Activated CD4-positive, alpha-beta T cell treated with anti-CD3 and anti-CD28 coated beads for 36 hours (primary cell): ENCODE measurements at regions of chr1 and their contacts with region 1.

Region 1: DNA sequence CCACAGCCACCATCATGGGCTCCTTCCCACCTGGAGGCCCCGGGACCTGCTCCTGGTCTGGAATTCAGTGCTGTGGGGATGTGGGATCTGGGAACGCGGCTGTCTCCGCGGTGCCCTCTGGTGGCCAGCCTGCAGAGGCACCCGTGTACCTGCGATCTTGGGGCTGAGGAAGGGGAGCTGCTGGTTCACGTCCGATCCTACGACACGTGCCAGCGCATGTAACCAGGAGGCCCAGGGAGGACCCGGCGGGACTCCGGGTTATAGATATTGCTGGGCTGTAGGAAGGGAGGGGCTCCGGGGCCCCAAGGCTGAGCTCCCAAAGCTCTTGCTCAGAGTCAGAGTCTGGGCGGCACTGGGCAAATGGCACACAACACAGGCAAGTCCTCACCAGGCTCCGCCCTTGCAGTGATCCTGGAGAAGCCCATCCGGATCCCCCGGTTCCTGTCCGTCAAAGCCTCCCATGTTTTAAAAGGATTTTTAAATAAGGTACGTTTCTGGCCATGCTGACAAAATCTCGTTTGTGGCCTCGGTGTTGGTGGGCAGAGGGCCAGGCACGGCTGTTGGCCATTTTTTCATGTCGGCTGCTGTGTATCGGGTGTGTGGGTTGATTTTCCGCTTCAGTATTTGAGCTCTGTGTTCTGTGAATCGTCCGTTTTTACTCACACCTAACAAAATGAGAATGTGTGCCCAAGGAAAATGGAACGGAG is 20.1 kb downstream of the FAAP20 start:
- DNase-seq: peak; percentile 73
- ATAC-seq: peak; percentile 80
- H3K4me3 Mint-ChIP-seq: peak overlapping the region; percentile 61
- H3K27ac Mint-ChIP-seq: peak overlapping the region; percentile 52
- H3K4me1 Mint-ChIP-seq: peaks cover 2% of the 10 kb centered on the region
- H3K27me3 Mint-ChIP-seq: no peaks in the 10 kb centered on the region

Region 2: GRCh38 chr1:1959840-1960479 is 214.5 kb before region 1 on chr1:
- CTCF ChIA-PET with region 1: interaction called, 3 read pairs
- POLR2A ChIA-PET with region 1: no interaction called
- intact Hi-C with region 1: loop called in 1 of 2 experiments (anchors 5 kb)
- DNase-seq: peak; percentile 93
- ATAC-seq: peak; percentile 93
- H3K4me3 Mint-ChIP-seq: no peak overlapping the region
- H3K27ac Mint-ChIP-seq: peak overlapping the region; percentile 67
- H3K4me1 Mint-ChIP-seq: peaks cover 11% of the 10 kb centered on the region
- H3K27me3 Mint-ChIP-seq: peaks cover 17% of the 10 kb centered on the region

Region 3: DNA sequence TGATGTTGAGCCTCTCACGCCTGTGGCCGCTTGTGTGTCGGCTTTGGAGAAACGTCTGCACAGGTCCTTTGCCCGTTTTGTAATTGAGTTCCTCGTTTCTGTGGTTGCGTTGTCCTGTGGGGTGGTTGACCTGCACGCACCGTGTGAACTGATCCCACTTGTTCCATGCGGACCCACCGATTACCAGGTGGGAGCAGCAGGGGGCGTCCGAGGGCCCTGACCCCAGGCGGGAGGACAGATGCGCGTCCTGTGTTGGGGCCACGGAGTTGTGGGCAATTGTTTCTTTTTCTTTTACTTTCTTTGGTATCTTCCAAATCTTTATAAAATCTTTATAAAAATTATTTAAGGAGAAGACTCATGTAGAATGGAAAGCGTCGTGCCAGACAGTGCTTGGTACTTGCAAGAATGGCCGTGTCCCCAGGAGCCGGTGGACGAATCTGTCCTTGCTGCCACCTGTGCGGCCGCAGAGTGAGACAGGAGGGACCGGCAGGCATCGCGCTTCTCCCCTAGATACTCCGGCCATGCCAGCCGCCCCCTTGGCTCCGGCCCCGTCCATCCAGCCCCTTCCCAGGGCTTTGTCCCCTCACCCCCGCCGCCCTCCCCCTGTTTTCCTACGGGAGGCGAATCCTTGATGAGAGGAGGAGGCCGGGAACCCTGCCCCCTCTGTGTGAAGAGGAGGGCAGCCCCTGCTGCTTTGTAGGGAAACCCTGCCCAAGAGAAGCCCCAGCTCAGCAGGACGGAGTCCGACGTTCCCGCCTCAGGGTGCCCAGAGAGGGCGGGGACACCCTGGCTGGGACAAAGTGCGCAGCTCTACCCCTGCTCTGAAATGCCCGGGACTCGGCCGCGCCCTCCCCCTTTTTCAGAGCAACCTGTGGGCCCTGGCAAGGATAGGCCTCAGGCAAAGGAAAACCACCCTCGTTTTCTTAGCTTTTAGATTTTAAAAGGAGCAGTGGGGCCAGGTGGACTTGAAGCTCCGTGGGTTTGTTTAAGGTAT is 82.6 kb before region 1 on chr1:
- CTCF ChIA-PET with region 1: interaction called, 9 read pairs
- POLR2A ChIA-PET with region 1: no interaction called
- intact Hi-C with region 1: loop called (anchors 1 to 5 kb)
- DNase-seq: peak; percentile 79
- ATAC-seq: peak; percentile 78
- H3K4me3 Mint-ChIP-seq: no peak overlapping the region
- H3K27ac Mint-ChIP-seq: no peak overlapping the region
- H3K4me1 Mint-ChIP-seq: peaks cover 3% of the 10 kb centered on the region
- H3K27me3 Mint-ChIP-seq: no peaks in the 10 kb centered on the region

Region 4: DNA sequence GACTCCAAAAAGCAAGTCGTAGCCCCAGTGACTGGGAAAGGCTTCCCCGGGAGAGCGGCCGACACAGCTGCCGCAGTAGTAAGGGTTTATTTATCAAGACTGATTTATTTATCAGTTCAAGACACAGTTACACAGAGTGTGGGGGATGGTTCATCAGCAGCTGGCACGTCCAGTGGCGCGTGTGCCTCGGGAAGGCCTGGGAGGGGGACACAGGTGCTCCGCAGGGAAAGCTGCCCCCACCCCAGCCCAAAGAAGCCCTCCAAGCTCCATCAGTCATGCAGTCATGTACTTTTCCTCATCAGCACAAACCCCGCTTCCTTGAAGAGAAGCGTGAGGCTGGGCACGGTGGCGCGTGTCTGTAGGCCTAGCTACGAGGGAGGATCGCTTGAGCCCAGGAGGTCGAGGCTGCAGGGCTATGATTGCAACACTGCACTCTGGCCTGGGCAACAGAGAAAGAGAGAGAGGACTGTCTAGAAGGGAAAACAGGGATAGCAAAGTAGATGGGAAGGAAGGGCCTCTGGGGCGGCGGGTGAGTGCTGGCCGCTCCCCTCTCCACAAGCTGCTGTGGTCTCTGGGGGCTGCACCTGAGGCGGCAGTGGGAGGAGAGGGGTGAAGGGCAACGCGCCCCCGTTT is 71.1 kb before region 1 on chr1:
- CTCF ChIA-PET with region 1: no interaction called
- POLR2A ChIA-PET with region 1: no interaction called
- intact Hi-C with region 1: no loop called
- DNase-seq: no peak
- ATAC-seq: no peak
- H3K4me3 Mint-ChIP-seq: no peak overlapping the region
- H3K27ac Mint-ChIP-seq: no peak overlapping the region
- H3K4me1 Mint-ChIP-seq: no peaks in the 10 kb centered on the region
- H3K27me3 Mint-ChIP-seq: no peaks in the 10 kb centered on the region

Region 5: GRCh38 chr1:2300851-2301606 is 126.5 kb after region 1 on chr1:
- CTCF ChIA-PET with region 1: no interaction called
- POLR2A ChIA-PET with region 1: no interaction called
- intact Hi-C with region 1: no loop called
- DNase-seq: peak; percentile 95
- ATAC-seq: peak; percentile 81
- H3K4me3 Mint-ChIP-seq: peak overlapping the region; percentile 79
- H3K27ac Mint-ChIP-seq: peak overlapping the region; percentile 95
- H3K4me1 Mint-ChIP-seq: peaks cover 59% of the 10 kb centered on the region
- H3K27me3 Mint-ChIP-seq: no peaks in the 10 kb centered on the region

Region 6: DNA sequence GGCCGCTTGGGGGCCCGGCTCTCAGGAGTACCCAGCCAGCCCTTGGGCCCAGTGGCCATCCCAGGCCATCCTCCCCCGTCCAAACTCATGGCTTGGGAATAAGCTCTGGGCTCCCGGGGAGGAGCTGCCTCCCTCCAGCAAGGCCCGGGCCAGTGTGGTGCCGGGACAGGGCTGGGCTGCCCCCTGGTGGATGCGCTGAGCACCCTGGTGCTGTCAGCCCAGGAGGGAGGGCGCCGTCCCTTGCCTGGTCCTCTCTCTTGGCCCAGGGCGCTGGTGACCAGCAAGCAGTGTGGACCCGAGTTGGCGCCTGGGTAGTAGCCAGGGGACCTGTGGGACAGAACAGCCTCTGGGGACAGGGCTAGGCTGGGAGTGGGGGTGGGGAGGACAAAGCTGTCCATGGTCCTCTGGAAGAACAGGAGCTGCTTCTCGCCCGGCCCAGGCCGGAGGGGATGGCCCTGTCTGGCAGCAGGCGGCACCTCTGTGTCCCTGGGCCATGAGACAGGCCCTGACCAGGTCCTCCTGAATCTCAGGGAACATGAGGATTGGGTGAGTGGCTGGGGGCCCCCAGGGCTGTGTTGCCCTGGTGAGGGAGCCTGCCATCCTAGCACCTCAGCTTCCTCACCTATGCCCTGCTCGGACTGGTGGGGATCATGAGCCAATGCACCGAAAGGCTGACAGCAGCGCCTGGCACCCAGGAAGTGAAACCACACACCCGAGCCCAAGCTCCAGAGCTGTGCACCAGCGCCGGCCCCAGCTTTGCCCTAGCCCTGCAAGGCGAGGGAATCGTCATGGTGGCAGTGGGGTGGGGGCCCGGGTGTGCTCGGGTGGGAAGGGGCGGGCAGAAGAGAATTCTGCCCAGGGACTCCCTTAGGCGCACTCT is 207.5 kb after region 1 on chr1:
- CTCF ChIA-PET with region 1: interaction called, 11 read pairs
- POLR2A ChIA-PET with region 1: no interaction called
- intact Hi-C with region 1: no loop called
- DNase-seq: peak; percentile 90
- ATAC-seq: peak; percentile 97
- H3K4me3 Mint-ChIP-seq: no peak overlapping the region
- H3K27ac Mint-ChIP-seq: no peak overlapping the region
- H3K4me1 Mint-ChIP-seq: no peaks in the 10 kb centered on the region
- H3K27me3 Mint-ChIP-seq: no peaks in the 10 kb centered on the region